Dendritic cell treated with granulocyte-macrophage colony-stimulating factor and Interleukin-4, amounts not matched to agents 40 ng/mL and 50 ng/mL, for 4 days (primary cell): ENCODE measurements at regions of chrX and their contacts with region 1.

Region 1: DNA sequence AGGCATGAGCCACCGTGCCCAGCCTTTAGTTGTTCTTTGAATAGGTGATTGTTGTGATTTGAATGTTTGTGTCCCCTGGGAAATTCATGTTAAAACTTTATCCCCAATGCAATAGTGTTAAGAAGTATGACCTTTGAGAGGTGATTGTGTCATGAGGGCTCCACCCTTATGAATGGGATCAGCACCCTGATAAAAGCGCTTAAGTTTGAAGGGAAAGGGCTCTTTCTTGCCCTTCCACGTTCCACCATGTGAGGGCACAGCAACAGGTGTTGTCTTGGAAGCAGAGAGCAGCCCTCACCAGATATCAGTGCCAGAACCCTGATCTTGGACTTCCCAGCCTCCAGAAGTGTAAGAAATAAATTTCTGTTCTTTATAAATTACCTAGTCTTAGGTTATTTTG is 33.7 kb upstream of the RP2 start:
- H3K4me3 Mint-ChIP-seq: no peak overlapping the region
- H3K27ac Mint-ChIP-seq: no peak overlapping the region
- H3K4me1 Mint-ChIP-seq: no peaks in the 10 kb centered on the region
- H3K27me3 Mint-ChIP-seq: peaks cover 2% of the 10 kb centered on the region

Region 2: DNA sequence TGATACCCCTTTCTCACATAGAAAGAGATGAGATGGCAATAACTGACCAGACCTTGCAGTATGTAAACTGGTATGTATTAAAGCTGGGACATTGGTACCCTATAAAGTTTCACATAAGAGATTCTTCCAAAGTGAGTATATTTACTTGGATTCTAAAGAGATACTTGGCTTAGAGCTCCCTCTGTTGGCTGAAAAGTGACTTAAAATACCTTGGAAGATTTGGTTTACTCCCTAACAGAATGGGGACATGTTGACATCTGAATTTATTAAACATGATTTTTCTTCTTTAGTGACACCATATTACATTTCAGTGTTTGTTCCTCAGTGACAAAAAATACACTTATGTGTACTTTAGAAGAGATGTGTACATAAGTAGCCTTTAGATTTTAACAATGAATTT is 227.2 kb after region 1 on chrX:
- intact Hi-C with region 1: loop called (anchors 5 kb)
- H3K4me3 Mint-ChIP-seq: no peak overlapping the region
- H3K27ac Mint-ChIP-seq: no peak overlapping the region
- H3K4me1 Mint-ChIP-seq: no peaks in the 10 kb centered on the region
- H3K27me3 Mint-ChIP-seq: no peaks in the 10 kb centered on the region

Region 3: DNA sequence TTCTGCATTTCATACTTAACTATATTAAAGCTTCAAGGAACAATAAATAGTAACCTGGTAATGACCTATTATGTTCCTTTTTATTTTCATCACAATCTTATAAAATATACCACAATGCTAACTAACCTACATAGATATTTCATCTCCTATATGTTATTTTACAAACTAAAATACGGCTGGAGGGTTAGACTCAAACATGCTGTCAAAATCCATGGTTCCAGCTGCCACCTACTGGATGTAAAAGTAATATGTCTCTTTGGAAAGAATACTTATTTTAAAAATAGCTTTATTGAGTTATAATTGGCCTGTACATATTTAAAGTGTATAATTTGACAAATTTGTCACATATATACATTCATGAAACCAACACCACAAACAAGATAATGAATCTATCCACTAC is 290.1 kb after region 1 on chrX:
- intact Hi-C with region 1: loop called (anchors 5 kb)
- H3K4me3 Mint-ChIP-seq: no peak overlapping the region
- H3K27ac Mint-ChIP-seq: no peak overlapping the region
- H3K4me1 Mint-ChIP-seq: no peaks in the 10 kb centered on the region
- H3K27me3 Mint-ChIP-seq: no peaks in the 10 kb centered on the region